Activated CD8-positive, alpha-beta memory T cell treated with anti-CD3 and anti-CD28 coated beads, Interleukin-2, amount 10 ng/mL, durations not matched to agents 7 days and 5 days (primary cell): ENCODE measurements at regions of chr2 and their contacts with region 1.

Region 1: DNA sequence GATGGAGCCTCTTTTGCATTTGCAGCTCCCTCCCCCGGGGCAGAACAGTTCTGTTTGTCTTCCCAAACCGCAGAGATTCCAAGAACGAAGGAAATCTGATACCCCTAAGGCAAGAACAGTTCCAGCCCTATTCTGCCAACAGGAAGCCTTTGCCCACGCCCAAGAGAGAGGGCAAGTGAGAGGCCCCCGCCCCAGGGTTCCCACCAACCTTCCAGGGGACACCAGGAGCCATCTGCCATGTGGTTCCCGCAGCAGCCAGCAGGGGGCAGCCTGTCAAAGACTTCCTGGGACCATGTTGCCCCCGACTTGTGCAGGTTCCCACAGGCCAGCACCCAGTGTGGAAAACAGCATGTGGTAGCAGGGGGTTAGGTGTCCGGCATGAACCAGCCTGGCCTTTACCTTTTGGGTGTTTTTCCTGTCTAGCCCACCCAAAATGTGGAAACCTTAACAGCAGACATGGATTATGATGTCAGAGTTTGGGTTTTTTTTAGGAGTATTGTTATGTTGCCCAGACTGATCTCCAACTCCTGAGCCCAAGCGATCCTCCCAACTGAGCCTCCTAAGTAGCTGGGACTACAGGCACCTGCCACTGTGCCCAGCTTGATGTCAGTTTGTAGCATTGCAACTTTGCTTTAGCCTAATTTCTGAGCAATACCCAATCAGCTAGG is 21.7 kb upstream of the EFHD1 start:
- DNase-seq: peak; percentile 75
- ATAC-seq: peak; percentile 70
- H3K4me3 Mint-ChIP-seq: no peak overlapping the region
- H3K27ac Mint-ChIP-seq: no peak overlapping the region
- H3K4me1 Mint-ChIP-seq: no peaks in the 10 kb centered on the region
- H3K27me3 Mint-ChIP-seq: peaks cover 3% of the 10 kb centered on the region

Region 2: GRCh38 chr2:232626584-232626983 is 14.9 kb after region 1 on chr2:
- CTCF ChIA-PET with region 1: interaction called, 10 read pairs
- DNase-seq: no peak
- ATAC-seq: no peak
- H3K4me3 Mint-ChIP-seq: no peak overlapping the region
- H3K27ac Mint-ChIP-seq: no peak overlapping the region
- H3K4me1 Mint-ChIP-seq: peaks cover 5% of the 10 kb centered on the region
- H3K27me3 Mint-ChIP-seq: peaks cover 23% of the 10 kb centered on the region